ENCODE measurements at regions of chr17 and their contacts with region 1.

Region 1: DNA sequence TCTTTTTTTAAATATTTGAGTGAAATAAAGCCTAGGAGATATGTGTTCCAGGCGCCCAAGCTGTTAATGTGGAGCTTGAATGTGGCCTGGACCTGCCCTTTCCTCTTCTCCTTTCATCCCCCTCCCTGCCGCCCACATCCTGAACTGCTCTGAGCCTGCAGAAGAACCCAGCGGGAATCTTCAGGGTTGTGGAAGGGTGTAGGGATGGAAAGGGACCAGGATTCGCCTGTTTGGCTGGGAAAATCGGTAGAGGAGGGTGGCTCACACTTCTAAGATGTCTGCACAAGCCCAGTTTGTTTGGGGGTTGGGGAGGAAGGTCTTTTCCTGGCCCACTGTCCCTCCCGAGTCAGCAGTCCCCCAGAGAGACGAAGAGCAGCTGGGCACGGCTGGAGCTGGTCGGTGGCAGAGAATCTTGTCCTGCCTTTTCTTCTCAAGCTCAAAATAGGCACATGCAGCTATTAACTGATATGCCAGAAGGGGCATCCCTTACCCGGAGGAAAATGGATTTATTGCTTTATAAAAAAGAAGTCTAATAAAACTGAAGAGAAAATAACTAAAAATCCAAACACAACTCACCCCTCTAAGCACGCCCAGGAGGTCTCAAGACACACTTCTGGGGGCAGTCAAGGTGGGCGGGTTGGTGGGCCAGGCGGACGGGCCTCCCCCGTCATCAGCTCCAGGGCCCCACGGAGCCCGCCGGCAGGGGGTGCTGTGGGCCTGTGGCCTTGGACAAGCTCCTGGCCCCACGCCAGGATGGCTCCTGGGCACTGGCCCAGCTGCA is 11.5 kb upstream of the PITPNA start:
- DNase-seq: peak; percentile 55
- H3K4me3 ChIP-seq: no peak overlapping the region
- H3K27ac ChIP-seq: no peak overlapping the region
- H3K27me3 ChIP-seq: peaks cover 2% of the 10 kb centered on the region
- CTCF ChIP-seq: peak; percentile 92

Region 2: GRCh38 chr17:1447052-1447451 is 127.1 kb before region 1 on chr17:
- CTCF ChIA-PET with region 1: no interaction called
- POLR2A ChIA-PET with region 1: no interaction called
- DNase-seq: no peak
- H3K4me3 ChIP-seq: no peak overlapping the region
- H3K27ac ChIP-seq: no peak overlapping the region
- H3K27me3 ChIP-seq: no peaks in the 10 kb centered on the region
- CTCF ChIP-seq: no peak

Region 3: DNA sequence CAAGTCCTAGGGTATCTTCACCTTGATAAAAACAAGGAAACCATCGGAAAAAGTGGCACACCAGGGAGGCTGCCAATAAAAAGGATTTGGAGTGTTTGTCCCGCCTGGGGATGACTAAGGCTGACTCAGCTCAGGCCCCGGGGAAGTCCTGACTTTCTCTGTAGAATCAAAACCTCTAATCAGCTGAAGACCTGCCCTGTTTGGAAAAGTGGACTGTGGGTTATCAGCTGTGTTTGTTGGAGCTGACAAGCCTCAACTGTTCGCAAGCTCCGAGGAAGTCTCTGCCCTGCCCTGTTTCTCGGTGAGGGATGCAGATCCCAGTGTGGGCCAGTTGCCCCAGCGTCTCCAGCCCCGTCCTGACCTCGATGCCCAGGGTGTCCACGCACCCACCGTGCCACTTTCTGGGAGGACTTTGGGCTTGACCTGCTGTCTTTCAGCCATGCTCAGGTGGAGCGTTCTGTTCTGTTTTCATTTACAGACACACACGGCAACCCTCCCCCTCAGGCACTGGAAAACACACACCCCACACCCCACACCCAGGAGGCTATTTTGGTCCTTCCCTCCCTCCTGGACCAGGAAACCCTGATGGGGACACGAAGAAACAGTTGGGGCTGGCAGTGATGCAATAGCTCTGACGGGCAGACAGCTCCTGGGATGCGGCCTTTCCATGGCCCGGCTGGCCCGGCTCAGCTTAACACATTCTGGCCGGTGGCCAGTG is 16.1 kb after region 1 on chr17:
- CTCF ChIA-PET with region 1: interaction called, 20 read pairs
- POLR2A ChIA-PET with region 1: interaction called, 5 read pairs
- DNase-seq: peak; percentile 53
- H3K4me3 ChIP-seq: peak overlapping the region; percentile 5; the same call in 1 of the 2 replicates
- H3K27ac ChIP-seq: peak overlapping the region; percentile 84
- H3K27me3 ChIP-seq: no peaks in the 10 kb centered on the region
- CTCF ChIP-seq: no peak

Region 4: DNA sequence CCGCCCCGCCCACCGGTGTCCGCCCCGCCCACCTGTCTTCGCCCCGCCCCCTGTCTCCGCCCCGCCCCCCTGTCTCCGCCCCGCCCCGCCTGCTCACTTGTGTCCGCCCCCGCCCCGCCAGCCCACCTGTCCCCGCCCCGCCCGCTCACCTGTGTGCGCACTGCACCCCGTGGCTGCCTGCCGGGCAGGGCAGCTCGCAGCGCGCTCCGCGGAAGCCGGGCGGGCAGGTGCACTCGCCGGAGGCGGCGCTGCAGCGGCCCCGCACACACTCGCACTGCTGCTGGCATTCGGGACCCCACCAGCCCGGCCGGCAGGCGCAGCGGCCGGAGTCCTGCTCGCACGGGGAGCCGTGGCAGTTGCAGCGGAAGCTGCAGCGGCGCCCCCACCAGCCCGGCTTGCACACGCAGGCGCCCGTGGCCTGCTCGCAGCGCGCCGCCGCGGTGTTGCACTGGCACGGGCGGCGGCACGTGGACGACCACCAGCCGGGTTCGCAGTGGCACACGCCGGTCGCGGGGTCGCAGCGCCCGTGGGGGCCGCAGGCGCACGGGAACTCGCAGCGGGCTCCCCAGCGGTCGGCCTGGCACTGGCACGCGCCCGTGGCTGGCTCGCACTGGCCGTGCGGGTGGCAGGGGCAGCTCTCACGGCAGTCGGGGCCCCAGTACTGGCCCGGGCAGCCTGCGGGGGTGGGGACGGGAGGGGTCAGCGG is 69.3 kb after region 1 on chr17:
- CTCF ChIA-PET with region 1: interaction called, 71 read pairs
- POLR2A ChIA-PET with region 1: interaction called, 18 read pairs
- DNase-seq: no peak
- H3K4me3 ChIP-seq: peak overlapping the region; percentile 34
- H3K27ac ChIP-seq: no peak overlapping the region
- H3K27me3 ChIP-seq: no peaks in the 10 kb centered on the region
- CTCF ChIP-seq: peak; percentile 15; the same call in 1 of the 2 replicates

Region 5: DNA sequence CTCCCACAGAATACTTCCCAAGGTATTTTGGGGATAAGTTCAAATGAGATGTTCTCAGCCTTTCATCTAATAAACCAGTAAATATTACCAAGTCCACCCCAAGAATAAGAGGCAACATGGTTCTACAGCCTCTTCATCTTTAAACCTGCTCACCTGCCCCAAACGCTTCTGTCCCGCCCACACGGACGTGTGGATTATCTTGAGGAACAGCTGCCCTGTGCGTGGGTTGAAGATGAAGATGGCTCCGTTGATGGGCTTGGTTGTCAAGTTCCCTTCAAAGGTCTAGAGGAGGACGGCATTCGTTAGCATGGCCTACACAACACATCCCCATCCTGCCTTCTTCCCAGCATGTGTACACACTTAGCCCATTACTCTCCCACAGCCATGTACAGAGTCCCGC is 84.0 kb after region 1 on chr17:
- CTCF ChIA-PET with region 1: interaction called, 11 read pairs
- POLR2A ChIA-PET with region 1: no interaction called
- DNase-seq: no peak
- H3K4me3 ChIP-seq: no peak overlapping the region
- H3K27ac ChIP-seq: no peak overlapping the region
- H3K27me3 ChIP-seq: no peaks in the 10 kb centered on the region
- CTCF ChIP-seq: no peak